HCT116 (cell line): ENCODE measurements at regions of chrX and their contacts with region 1.

Region 1: DNA sequence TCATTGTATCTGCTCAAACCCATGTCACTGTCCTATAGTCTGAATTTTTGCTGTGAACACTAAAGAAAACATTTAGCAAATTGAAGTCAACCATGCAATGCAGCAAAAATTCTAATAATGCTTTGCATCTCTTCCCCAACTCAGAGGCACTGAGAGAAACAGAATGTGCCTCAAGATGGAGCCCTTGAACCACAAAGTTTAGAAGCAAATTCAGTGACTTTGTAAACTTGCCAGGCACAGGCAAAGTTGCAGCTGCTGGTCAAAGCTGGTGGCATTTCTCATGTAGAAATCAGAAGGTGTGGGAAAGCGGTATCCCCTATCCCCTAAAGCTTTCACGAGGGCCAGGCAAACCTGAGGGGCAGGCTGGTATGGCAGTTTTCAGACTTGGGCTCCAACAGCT is 121.7 kb upstream of the DIPK2B start:
- DNase-seq: peak; percentile 51
- ATAC-seq: peak; percentile 49
- H3K4me3 ChIP-seq: no peak overlapping the region
- H3K27ac ChIP-seq: peak overlapping the region; percentile 76; the same call in 1 of the 2 replicates
- H3K4me1 ChIP-seq: peaks cover 8 to 31% of the 10 kb centered on the region in 2 experiments; a peak in 3 of 4 replicates
- H3K27me3 ChIP-seq: no peaks in the 10 kb centered on the region
- CTCF ChIP-seq: peak; percentile 19 to 40 (median 22); a peak in 3 of 6 replicates
- POLR2A ChIP-seq: no peak
- RAD21 ChIP-seq: peak; percentile 81

Region 2: DNA sequence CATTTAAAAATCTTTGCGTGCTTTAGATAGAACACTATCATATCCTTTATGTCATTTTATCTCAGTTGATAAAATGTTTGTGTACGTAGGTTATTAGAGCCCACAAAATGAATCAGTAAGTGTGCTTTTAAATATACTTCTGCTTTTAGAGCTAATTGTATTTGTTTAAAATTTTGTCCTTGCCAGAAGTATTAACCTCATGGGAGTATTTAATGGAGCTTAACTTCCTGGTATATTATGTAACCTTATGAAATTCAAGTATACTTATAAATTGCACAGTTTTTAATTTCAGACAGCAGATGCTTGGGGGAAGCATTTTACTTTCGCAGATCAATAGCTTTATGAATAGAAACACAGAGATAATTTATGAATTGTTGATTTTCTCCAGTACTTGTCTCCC is 211.9 kb before region 1 on chrX:
- CTCF ChIA-PET with region 1: no interaction called
- POLR2A ChIA-PET with region 1: no interaction called
- RAD21 ChIA-PET with region 1: no interaction called
- intact Hi-C with region 1: no loop called
- DNase-seq: no peak
- ATAC-seq: no peak
- H3K4me3 ChIP-seq: no peak overlapping the region
- H3K27ac ChIP-seq: no peak overlapping the region
- H3K4me1 ChIP-seq: no peaks in the 10 kb centered on the region; a peak in 1 of 4 replicates
- H3K27me3 ChIP-seq: no peaks in the 10 kb centered on the region
- CTCF ChIP-seq: no peak
- POLR2A ChIP-seq: no peak
- RAD21 ChIP-seq: no peak

Region 3: DNA sequence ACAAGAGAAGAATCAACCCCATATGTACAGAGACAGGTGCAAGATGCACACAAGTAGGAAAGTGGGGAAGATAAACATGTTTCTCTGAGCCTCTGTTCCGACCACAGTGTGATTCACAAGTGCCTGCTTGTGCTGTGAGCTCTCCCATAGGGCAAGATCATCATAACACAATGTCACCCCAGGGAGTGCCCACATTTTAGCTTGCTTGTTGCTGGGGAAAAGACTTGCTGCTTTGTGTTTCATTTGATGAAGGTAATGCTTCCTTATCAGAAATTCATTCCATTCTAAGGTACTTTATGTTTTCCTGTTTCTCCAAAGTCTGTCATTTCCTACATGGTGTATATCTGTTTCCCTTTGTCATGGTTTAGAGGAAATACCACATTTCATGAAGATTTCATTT is 182.8 kb after region 1 on chrX:
- CTCF ChIA-PET with region 1: interaction called, 3 read pairs
- POLR2A ChIA-PET with region 1: interaction called, 4 read pairs
- RAD21 ChIA-PET with region 1: no interaction called
- intact Hi-C with region 1: loop called (anchors 2 kb)
- DNase-seq: no peak
- ATAC-seq: no peak
- H3K4me3 ChIP-seq: no peak overlapping the region
- H3K27ac ChIP-seq: peak overlapping the region; percentile 96
- H3K4me1 ChIP-seq: peaks cover 26 to 45% of the 10 kb centered on the region in 2 experiments
- H3K27me3 ChIP-seq: no peaks in the 10 kb centered on the region
- CTCF ChIP-seq: no peak
- POLR2A ChIP-seq: no peak
- RAD21 ChIP-seq: no peak

Region 4: DNA sequence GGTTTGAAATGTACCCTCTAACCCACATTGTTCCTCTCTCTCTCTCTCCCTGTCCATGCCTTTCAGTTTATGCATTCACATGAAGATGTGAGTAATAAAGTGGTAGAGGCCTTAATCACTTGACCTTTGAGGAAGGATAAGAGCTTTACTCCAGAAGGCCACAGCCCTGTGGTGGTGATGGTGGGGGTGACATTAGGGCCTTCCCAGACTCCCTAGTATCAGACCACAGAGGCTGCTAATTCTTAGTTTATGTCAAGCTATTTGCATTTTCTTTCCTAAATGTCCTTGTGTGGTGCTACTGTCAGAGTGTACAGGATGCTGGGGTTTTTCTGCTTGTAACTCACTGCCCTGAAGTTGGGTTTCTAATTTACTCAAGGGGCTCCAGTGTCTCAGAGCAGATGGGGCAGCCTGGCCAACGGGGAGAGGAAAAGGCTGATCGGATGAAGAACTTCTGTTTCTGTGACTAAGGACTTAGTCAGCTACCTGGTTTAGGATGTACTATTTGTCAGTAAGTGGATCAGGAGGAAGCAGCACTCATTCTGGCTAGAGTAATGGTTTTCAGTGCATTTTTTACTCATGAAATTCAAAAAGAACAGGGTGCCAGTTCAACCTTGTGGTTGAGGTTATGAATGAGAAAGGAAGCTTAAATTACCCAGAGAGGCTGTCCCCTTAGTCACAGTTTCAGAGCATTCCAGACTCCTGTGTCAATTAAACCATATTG is 387.9 kb after region 1 on chrX:
- CTCF ChIA-PET with region 1: interaction called, 5 read pairs
- POLR2A ChIA-PET with region 1: no interaction called
- RAD21 ChIA-PET with region 1: interaction called in 1 of 2 experiments, 4 read pairs
- intact Hi-C with region 1: loop called (anchors 1 kb)
- DNase-seq: peak; percentile 99
- ATAC-seq: peak; percentile 87
- H3K4me3 ChIP-seq: no peak overlapping the region
- H3K27ac ChIP-seq: peak overlapping the region; percentile 99
- H3K4me1 ChIP-seq: peaks cover 44 to 66% of the 10 kb centered on the region in 2 experiments
- H3K27me3 ChIP-seq: no peaks in the 10 kb centered on the region
- CTCF ChIP-seq: no peak
- POLR2A ChIP-seq: no peak
- RAD21 ChIP-seq: no peak

Region 5: GRCh38 chrX:45743081-45743533 is 420.7 kb after region 1 on chrX:
- CTCF ChIA-PET with region 1: no interaction called
- POLR2A ChIA-PET with region 1: no interaction called
- RAD21 ChIA-PET with region 1: no interaction called
- intact Hi-C with region 1: loop called (anchors 1 kb)
- DNase-seq: peak; percentile 76
- ATAC-seq: peak; percentile 79
- H3K4me3 ChIP-seq: no peak overlapping the region
- H3K27ac ChIP-seq: peak overlapping the region; percentile 94
- H3K4me1 ChIP-seq: peaks cover 12 to 63% of the 10 kb centered on the region in 2 experiments
- H3K27me3 ChIP-seq: no peaks in the 10 kb centered on the region
- CTCF ChIP-seq: peak in 2 of 3 experiments; percentile 46 to 50; a peak in 4 of 6 replicates
- POLR2A ChIP-seq: no peak
- RAD21 ChIP-seq: no peak

Region 6: DNA sequence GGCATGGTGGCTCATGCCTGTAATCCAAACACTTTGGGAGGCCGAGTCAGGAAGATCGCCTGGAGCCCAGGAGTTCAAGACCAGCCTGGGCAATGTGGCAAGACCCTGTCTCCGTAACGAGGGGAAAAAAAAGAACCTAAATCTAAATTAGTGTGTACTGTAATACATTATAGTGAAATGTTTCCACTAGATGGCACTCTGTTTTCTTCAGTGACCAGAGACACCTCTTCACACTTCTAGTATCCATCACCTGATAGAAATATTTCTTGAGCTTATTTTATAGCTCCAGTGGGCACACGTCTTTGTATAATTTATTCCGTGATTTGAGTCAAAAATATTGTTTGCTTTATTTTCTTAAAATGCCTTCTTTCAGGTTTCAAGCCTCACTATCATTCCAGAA is 479.2 kb after region 1 on chrX:
- CTCF ChIA-PET with region 1: no interaction called
- POLR2A ChIA-PET with region 1: no interaction called
- RAD21 ChIA-PET with region 1: no interaction called
- intact Hi-C with region 1: loop called (anchors 5 kb)
- DNase-seq: no peak
- ATAC-seq: peak; percentile 38; the same call in 1 of the 2 replicates
- H3K4me3 ChIP-seq: peak overlapping the region in 1 of 2 experiments; percentile 8; a peak in 1 of 4 replicates
- H3K27ac ChIP-seq: peak overlapping the region; percentile 74
- H3K4me1 ChIP-seq: peaks cover 71 to 99% of the 10 kb centered on the region in 2 experiments
- H3K27me3 ChIP-seq: no peaks in the 10 kb centered on the region
- CTCF ChIP-seq: peak in 1 of 3 experiments; percentile 29; a peak in 2 of 6 replicates
- POLR2A ChIP-seq: no peak
- RAD21 ChIP-seq: no peak

Region 7: DNA sequence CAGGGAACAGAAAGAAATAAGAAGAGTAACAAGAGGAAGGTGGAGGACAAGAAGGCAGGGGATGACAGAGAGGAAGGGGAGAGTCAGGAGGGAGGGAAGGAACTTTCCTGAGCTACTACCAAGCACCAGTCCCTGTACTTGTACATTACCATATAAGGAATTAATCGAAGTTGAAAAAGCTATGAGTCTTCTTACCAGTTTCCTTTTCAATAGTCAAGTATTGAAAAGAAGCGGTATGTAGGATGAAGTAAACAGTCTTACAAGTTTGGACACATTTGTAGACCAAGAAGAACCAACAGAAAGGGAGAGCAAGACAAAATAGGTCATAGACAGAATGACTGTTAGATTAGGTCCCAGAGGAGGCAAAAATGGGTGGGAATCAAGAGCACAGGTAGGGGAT is 508.0 kb after region 1 on chrX:
- CTCF ChIA-PET with region 1: no interaction called
- POLR2A ChIA-PET with region 1: no interaction called
- RAD21 ChIA-PET with region 1: no interaction called
- intact Hi-C with region 1: no loop called
- DNase-seq: no peak
- ATAC-seq: no peak
- H3K4me3 ChIP-seq: no peak overlapping the region
- H3K27ac ChIP-seq: peak overlapping the region; percentile 35; the same call in 1 of the 2 replicates
- H3K4me1 ChIP-seq: peaks cover 17 to 88% of the 10 kb centered on the region in 2 experiments
- H3K27me3 ChIP-seq: no peaks in the 10 kb centered on the region
- CTCF ChIP-seq: no peak
- POLR2A ChIP-seq: no peak
- RAD21 ChIP-seq: no peak

Region 8: DNA sequence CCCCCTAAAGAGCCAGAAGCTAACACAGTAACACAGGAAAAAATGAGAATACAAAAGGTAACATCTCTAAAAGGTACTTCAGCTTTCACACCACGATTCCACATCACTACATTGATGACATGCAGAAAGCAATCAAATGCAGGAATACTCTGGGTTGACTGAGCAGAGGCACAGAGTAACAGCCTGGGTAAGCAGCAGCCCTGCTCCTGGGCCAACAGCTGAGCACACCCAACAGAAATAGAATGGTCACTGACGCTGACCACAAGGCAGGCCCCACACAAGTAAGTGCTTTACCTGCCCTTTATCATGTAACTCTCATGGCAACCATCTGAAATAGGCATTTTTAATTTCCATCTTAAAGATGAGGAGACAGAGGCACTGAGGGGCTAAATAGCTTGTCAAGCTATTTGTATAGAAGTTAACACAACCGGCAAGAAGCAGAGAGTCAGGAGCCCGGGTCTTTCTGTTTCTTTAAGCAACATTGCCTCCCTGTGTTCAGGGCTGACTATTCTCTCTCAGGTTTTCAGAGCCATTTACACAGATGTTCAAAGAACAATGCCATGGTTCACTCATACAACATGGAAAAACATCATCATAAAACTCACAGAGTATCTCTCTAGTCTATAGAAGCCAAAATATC is 1054.0 kb after region 1 on chrX:
- CTCF ChIA-PET with region 1: interaction called, 9 read pairs
- POLR2A ChIA-PET with region 1: no interaction called
- RAD21 ChIA-PET with region 1: interaction called in 1 of 2 experiments, 3 read pairs
- intact Hi-C with region 1: loop called (anchors 2 kb)
- DNase-seq: peak; percentile 56
- ATAC-seq: peak; percentile 90
- H3K4me3 ChIP-seq: no peak overlapping the region
- H3K27ac ChIP-seq: peak overlapping the region; percentile 89
- H3K4me1 ChIP-seq: peaks cover 19 to 39% of the 10 kb centered on the region in 2 experiments
- H3K27me3 ChIP-seq: no peaks in the 10 kb centered on the region
- CTCF ChIP-seq: peak; percentile 24 to 52 (median 37); a peak in 4 of 6 replicates
- POLR2A ChIP-seq: no peak
- RAD21 ChIP-seq: peak; percentile 83

Region 9: GRCh38 chrX:46408553-46409407 is 1086.4 kb after region 1 on chrX:
- CTCF ChIA-PET with region 1: interaction called, 9 read pairs
- POLR2A ChIA-PET with region 1: interaction called, 3 read pairs
- RAD21 ChIA-PET with region 1: no interaction called
- intact Hi-C with region 1: loop called (anchors 10 kb)
- DNase-seq: peak; percentile 42
- ATAC-seq: peak; percentile 49; the same call in 1 of the 2 replicates
- H3K4me3 ChIP-seq: no peak overlapping the region
- H3K27ac ChIP-seq: peak overlapping the region; percentile 39; the same call in 1 of the 2 replicates
- H3K4me1 ChIP-seq: peaks cover 0 to 12% of the 10 kb centered on the region in 2 experiments; a peak in 2 of 4 replicates
- H3K27me3 ChIP-seq: no peaks in the 10 kb centered on the region
- CTCF ChIP-seq: peak; percentile 53 to 74 (median 53); a peak in 5 of 6 replicates
- POLR2A ChIP-seq: no peak
- RAD21 ChIP-seq: peak; percentile 85